Dendritic cell treated with granulocyte-macrophage colony-stimulating factor and Interleukin-4, amounts not matched to agents 40 ng/mL and 50 ng/mL, for 4 days (primary cell): ENCODE measurements at regions of chr1 and their contacts with region 1.

Region 1: DNA sequence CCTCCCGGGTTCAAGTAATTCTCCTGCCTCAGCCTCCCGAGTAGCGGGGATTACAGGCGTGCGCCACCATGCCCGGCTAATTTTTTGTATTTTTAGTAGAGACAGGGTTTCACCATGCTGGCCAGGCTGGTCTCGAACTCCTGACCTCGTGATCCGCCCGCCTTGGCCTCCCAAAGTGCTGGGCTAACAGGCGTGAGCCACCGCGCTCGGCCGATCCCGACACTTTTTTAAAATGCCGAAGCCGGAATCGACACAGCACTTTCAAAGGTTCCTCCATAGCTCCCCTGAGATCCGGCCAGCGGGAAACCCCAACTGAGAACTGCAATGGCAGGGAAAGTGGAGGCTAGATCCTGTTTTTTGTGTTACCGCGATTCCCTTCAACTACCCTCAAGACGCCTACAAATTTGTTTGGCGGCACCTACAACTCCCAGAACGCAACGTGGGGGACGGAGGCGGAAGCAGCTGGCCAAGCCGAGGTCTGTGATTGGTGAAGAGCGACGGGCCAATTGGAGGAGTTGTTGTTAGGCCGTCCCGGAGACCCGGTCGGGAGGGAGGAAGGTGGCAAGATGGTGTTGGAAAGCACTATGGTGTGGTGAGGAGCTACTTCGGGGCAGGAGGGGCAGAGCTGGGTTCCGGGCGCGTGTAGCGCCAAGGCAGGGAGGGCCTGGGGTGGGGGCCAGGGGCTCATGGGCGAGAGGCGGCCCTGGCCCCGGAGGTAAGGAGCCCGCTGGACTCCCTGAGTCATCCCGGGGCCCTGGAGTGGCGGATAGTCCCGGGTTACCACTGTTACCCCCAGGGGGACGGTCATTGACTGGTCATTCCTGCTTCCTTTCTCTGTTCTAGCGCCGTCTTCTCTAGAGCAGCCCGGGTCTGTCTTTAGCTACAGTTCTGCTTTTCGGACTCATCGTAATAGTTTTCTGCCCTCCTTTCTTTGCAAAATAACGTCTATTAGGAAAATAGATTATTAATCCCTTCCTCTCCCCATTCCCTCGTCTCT is at the start of gene PSMD4:
- H3K4me3 Mint-ChIP-seq: peak within 1 kb of the TSS; percentile 77
- H3K27ac Mint-ChIP-seq: peak within 1 kb of the TSS; percentile 97
- H3K4me1 Mint-ChIP-seq: peaks cover 26% of the 10 kb centered on the region
- H3K27me3 Mint-ChIP-seq: no peaks in the 10 kb centered on the region

Region 2: GRCh38 chr1:151198255-151199127 is 56.0 kb before region 1 on chr1 and contains the start of gene PIP5K1A:
- intact Hi-C with region 1: loop called (anchors 2 kb)
- H3K4me3 Mint-ChIP-seq: peak within 1 kb of the TSS; percentile 97
- H3K27ac Mint-ChIP-seq: peak within 1 kb of the TSS; percentile 98
- H3K4me1 Mint-ChIP-seq: peaks cover 42% of the 10 kb centered on the region
- H3K27me3 Mint-ChIP-seq: peaks cover 1% of the 10 kb centered on the region

Region 3: GRCh38 chr1:151281969-151282882 is 27.7 kb after region 1 on chr1 and contains the start of gene ZNF687:
- intact Hi-C with region 1: loop called (anchors 2 kb)
- H3K4me3 Mint-ChIP-seq: peak within 1 kb of the TSS; percentile 97
- H3K27ac Mint-ChIP-seq: peak within 1 kb of the TSS; percentile 96
- H3K4me1 Mint-ChIP-seq: peaks cover 37% of the 10 kb centered on the region
- H3K27me3 Mint-ChIP-seq: no peaks in the 10 kb centered on the region

Region 4: GRCh38 chr1:151311589-151312331 is 57.2 kb after region 1 on chr1:
- intact Hi-C with region 1: no loop called
- H3K4me3 Mint-ChIP-seq: no peak overlapping the region
- H3K27ac Mint-ChIP-seq: peak overlapping the region; percentile 65
- H3K4me1 Mint-ChIP-seq: peaks cover 54% of the 10 kb centered on the region
- H3K27me3 Mint-ChIP-seq: no peaks in the 10 kb centered on the region